ENCODE measurements at regions of chr2 and their contacts with region 1.

Region 1: DNA sequence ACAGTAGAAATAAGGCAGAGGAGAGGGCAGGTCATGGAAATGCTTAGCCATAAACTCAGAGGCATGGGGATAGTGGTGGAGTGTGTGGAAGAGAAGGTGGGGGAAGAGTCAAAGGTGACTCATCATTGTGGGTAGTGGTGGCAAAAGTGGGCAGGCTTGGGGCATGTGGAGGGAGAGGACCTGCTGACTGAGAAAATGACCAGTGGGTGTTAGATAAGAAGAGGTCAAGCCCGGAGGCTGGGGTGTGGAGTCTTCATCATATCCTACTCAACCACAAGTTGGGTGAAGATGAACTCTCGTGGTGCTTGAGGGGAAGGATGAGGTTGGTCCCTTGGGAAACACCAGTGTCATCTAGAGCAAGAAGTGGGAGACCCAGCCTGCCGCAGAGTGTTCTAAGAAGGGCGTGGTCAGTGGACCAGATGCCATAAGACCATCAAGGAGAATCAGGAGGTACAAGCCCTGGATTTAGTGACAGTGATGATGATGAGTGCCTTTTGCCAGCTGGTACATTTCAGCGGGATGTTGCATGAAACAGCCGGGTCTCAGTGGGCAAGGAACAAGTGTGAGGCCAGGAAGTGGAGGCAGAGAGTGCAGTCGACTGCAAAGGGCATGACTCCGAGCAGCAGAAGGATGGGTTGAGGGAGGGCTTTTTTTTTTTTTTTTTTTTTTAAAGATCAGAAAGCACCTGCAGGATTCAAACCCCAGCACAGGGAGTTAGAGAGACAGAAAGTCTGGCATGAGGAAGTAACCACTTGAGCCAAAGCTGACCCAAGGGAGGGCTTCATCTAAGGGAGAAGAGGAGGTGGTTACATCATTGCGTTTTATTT is 122.6 kb upstream of the SPRED2 start:
- DNase-seq: no peak
- ATAC-seq: no peak
- H3K4me3 ChIP-seq: no peak overlapping the region
- H3K27ac ChIP-seq: no peak overlapping the region
- H3K4me1 ChIP-seq: no peaks in the 10 kb centered on the region; the same call in 1 of the 2 replicates
- H3K27me3 ChIP-seq: no peaks in the 10 kb centered on the region
- CTCF ChIP-seq: no peak

Region 2: DNA sequence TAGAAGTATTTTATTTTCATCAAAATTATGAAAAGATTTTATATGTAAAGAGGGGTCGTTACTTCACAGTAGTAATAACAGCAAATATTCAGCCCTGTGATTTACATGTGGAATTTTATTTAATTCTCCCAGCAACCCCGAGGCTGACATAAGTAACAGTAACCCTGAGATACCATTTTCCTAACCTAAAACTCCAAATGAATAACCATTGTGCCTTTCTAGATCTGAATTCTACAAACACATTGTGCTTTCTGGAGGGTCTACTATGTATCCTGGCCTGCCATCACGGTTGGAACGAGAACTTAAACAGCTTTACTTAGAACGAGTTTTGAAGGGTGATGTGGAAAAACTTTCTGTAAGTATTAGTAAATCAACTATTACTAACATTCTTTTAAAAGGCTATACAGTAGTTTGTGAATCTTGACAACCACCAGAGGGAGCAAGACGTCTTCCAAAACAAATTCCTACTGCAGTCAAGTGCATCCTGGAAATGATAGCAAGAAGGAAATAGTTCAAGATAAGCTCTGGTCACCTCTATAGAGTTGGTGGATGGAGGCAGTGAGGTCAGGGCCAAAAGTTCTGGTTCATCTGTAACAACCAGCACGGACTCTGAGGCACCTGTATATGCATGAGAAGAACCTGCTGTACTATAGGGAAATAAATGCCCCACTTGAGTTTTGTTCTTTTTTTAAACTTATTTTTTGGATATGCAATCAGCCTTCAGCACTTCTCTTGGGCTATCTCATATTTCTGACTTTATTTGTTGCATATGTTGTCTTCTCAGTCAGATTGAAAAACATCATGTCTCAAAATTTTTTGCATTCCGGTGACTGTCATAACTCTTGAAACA is 289.9 kb before region 1 on chr2:
- CTCF ChIA-PET with region 1: no interaction called
- POLR2A ChIA-PET with region 1: interaction called, 3 read pairs
- in situ Hi-C with region 1: no loop called
- intact Hi-C with region 1: loop called (anchors 5 kb)
- DNase-seq: peak; percentile 54
- ATAC-seq: peak; percentile 70
- H3K4me3 ChIP-seq: no peak overlapping the region
- H3K27ac ChIP-seq: no peak overlapping the region
- H3K4me1 ChIP-seq: peaks cover 17% of the 10 kb centered on the region
- H3K27me3 ChIP-seq: no peaks in the 10 kb centered on the region
- CTCF ChIP-seq: peak; percentile 74

Region 3: GRCh38 chr2:65350684-65351083 is 204.3 kb before region 1 on chr2:
- CTCF ChIA-PET with region 1: no interaction called
- POLR2A ChIA-PET with region 1: no interaction called
- in situ Hi-C with region 1: no loop called
- intact Hi-C with region 1: loop called (anchors 10 kb)
- DNase-seq: no peak
- ATAC-seq: peak; percentile 59
- H3K4me3 ChIP-seq: no peak overlapping the region
- H3K27ac ChIP-seq: peak overlapping the region; percentile 69
- H3K4me1 ChIP-seq: peaks cover 63% of the 10 kb centered on the region
- H3K27me3 ChIP-seq: no peaks in the 10 kb centered on the region
- CTCF ChIP-seq: peak; percentile 52

Region 4: DNA sequence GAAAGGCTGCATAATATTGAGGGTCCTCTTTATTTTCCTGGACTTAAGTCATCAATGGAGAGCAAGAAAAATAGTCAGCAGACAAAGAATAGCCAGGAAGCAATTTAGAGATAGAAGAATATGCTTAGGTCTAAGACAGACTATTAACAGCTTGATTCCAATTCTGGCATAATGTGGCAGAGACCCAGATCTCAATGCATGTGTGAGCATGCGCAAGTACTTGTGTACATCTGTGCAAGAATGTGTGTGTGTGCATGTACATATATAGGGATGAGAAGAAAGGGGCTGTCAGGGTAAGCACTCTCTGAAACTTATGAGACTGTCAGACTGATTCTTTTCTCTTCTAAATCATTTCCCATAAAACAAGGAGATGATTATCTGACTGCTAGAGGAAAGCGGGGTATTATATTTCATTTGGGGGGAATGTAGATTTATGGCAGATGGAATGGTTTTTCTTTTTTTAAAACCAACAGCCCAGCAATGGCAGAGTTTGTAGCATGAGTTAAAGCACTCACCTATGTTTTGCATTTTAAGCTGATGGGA is 258.7 kb after region 1 on chr2:
- CTCF ChIA-PET with region 1: no interaction called
- POLR2A ChIA-PET with region 1: no interaction called
- in situ Hi-C with region 1: no loop called
- intact Hi-C with region 1: no loop called
- DNase-seq: no peak
- ATAC-seq: no peak
- H3K4me3 ChIP-seq: no peak overlapping the region
- H3K27ac ChIP-seq: no peak overlapping the region
- H3K4me1 ChIP-seq: no peaks in the 10 kb centered on the region
- H3K27me3 ChIP-seq: no peaks in the 10 kb centered on the region
- CTCF ChIP-seq: no peak

Measured in Panc1 (cell line).